PC-9 (cell line): ENCODE measurements at regions of chr15 and their contacts with region 1.

Region 1: GRCh38 chr15:75661091-75661777 is 13.5 kb downstream of the SNX33 start:
- DNase-seq: peak; percentile 82 to 91
- H3K4me3 ChIP-seq: peak overlapping the region; percentile 23; the same call in 1 of the 2 replicates
- H3K27ac ChIP-seq: peak overlapping the region; percentile 85
- H3K4me1 ChIP-seq: peaks cover 61% of the 10 kb centered on the region
- H3K27me3 ChIP-seq: no peaks in the 10 kb centered on the region
- CTCF ChIP-seq: no peak

Region 2: GRCh38 chr15:75672646-75673425 is 11.6 kb after region 1 on chr15:
- CTCF ChIA-PET with region 1: no interaction called
- POLR2A ChIA-PET with region 1: interaction called, 13 read pairs
- intact Hi-C with region 1: no loop called
- DNase-seq: peak; percentile 72 to 81
- H3K4me3 ChIP-seq: peak overlapping the region; percentile 32; the same call in 1 of the 2 replicates
- H3K27ac ChIP-seq: peak overlapping the region; percentile 71
- H3K4me1 ChIP-seq: peaks cover 71% of the 10 kb centered on the region
- H3K27me3 ChIP-seq: no peaks in the 10 kb centered on the region
- CTCF ChIP-seq: no peak

Region 3: GRCh38 chr15:75684642-75685041 is 23.4 kb after region 1 on chr15:
- CTCF ChIA-PET with region 1: no interaction called
- POLR2A ChIA-PET with region 1: no interaction called
- intact Hi-C with region 1: no loop called
- DNase-seq: no peak
- H3K4me3 ChIP-seq: no peak overlapping the region
- H3K27ac ChIP-seq: no peak overlapping the region
- H3K4me1 ChIP-seq: no peaks in the 10 kb centered on the region
- H3K27me3 ChIP-seq: no peaks in the 10 kb centered on the region
- CTCF ChIP-seq: no peak